Activated CD4-positive, alpha-beta T cell treated with anti-CD3 and anti-CD28 coated beads for 36 hours (primary cell): ENCODE measurements at regions of chr2 and their contacts with region 1.

Region 1: GRCh38 chr2:100703213-100703612 is 116.7 kb upstream of the NPAS2 start:
- DNase-seq: no peak
- ATAC-seq: no peak
- H3K4me3 Mint-ChIP-seq: no peak overlapping the region
- H3K27ac Mint-ChIP-seq: no peak overlapping the region
- H3K4me1 Mint-ChIP-seq: peaks cover 25% of the 10 kb centered on the region
- H3K27me3 Mint-ChIP-seq: no peaks in the 10 kb centered on the region

Region 2: GRCh38 chr2:101793277-101793969 is 1090.2 kb after region 1 on chr2:
- CTCF ChIA-PET with region 1: no interaction called
- POLR2A ChIA-PET with region 1: no interaction called
- intact Hi-C with region 1: no loop called
- DNase-seq: peak; percentile 28
- ATAC-seq: no peak
- H3K4me3 Mint-ChIP-seq: no peak overlapping the region
- H3K27ac Mint-ChIP-seq: no peak overlapping the region
- H3K4me1 Mint-ChIP-seq: peaks cover 57% of the 10 kb centered on the region
- H3K27me3 Mint-ChIP-seq: no peaks in the 10 kb centered on the region

Region 3: GRCh38 chr2:101961296-101962191 is 1258.3 kb after region 1 on chr2:
- CTCF ChIA-PET with region 1: no interaction called
- POLR2A ChIA-PET with region 1: no interaction called
- intact Hi-C with region 1: loop called in 1 of 2 experiments (anchors 5 kb)
- DNase-seq: no peak
- ATAC-seq: no peak
- H3K4me3 Mint-ChIP-seq: no peak overlapping the region
- H3K27ac Mint-ChIP-seq: no peak overlapping the region
- H3K4me1 Mint-ChIP-seq: peaks cover 7% of the 10 kb centered on the region
- H3K27me3 Mint-ChIP-seq: no peaks in the 10 kb centered on the region